Activated CD8-positive, alpha-beta T cell treated with anti-CD3 and anti-CD28 coated beads, Interleukin-2, amount 10 ng/mL, durations not matched to agents 7 days and 5 days (primary cell): ENCODE measurements at regions of chr4 and their contacts with region 1.

Region 1: DNA sequence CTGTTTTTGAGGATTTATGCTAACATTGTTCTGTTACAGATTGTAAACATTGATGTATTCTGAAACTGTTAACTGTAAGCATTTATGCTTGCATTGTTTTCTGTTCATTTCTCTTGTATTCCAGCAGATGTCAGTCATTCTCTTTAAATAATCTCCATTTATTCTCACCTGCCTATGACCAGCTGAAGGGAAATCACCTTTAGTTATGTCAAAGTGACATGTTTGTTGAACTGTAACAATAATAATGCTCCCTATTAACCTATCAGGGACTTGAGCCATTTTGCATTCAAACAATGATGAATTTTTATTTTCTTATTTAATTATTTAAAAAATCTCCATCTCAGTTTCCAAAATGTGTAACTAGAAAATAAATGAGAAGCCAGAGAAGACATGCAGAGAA is 58.0 kb downstream of the SPCS3 start:
- DNase-seq: no peak
- ATAC-seq: no peak
- H3K4me3 Mint-ChIP-seq: no peak overlapping the region
- H3K27ac Mint-ChIP-seq: no peak overlapping the region
- H3K4me1 Mint-ChIP-seq: no peaks in the 10 kb centered on the region
- H3K27me3 Mint-ChIP-seq: no peaks in the 10 kb centered on the region

Region 2: DNA sequence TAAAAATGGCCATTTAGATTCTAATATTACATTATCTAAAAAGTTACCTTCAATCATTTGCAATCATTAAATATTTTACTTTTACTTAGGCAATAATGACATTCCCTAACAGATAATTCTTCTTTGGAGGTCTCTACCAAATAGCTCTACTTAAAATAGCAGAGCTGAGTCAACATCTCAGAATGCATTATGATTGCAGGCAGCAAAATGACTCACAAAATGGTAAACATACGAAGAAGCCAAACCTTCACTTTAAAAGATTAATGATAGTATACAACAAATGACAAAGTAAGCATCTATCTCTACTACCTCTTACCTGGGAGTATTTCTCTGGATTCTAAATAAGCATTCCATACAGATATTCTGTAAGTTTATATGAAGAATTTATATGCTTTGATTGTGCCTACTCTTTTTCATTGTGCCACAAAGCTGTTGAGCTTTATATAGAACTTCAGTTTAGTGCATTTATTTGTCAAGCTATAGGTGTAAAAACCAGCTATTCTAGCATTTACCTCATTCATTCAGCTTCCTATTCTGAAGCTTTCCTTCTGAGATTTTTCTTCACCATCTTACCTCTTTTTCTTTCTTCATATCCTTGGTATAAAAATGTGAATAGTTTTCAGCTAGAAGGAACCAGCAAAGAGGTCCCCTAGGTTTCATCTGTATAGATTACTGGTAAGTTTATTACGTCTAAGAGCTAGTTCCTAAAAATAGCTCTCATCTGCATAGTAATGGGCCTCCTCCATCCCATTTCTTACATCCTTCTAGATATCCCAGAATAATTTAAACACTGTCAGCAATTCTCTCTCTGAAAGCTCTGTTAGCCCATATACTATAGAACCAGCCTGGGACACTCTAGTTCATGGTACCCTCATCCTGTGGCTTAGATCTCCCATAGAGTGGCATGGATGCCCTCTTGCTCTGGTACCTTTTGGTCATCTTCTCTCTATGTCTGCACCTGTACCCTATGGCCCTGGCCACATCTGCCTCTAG is 75.2 kb before region 1 on chr4:
- CTCF ChIA-PET with region 1: no interaction called
- POLR2A ChIA-PET with region 1: no interaction called
- DNase-seq: no peak
- ATAC-seq: no peak
- H3K4me3 Mint-ChIP-seq: no peak overlapping the region
- H3K27ac Mint-ChIP-seq: no peak overlapping the region
- H3K4me1 Mint-ChIP-seq: no peaks in the 10 kb centered on the region
- H3K27me3 Mint-ChIP-seq: peaks cover 8% of the 10 kb centered on the region

Region 3: DNA sequence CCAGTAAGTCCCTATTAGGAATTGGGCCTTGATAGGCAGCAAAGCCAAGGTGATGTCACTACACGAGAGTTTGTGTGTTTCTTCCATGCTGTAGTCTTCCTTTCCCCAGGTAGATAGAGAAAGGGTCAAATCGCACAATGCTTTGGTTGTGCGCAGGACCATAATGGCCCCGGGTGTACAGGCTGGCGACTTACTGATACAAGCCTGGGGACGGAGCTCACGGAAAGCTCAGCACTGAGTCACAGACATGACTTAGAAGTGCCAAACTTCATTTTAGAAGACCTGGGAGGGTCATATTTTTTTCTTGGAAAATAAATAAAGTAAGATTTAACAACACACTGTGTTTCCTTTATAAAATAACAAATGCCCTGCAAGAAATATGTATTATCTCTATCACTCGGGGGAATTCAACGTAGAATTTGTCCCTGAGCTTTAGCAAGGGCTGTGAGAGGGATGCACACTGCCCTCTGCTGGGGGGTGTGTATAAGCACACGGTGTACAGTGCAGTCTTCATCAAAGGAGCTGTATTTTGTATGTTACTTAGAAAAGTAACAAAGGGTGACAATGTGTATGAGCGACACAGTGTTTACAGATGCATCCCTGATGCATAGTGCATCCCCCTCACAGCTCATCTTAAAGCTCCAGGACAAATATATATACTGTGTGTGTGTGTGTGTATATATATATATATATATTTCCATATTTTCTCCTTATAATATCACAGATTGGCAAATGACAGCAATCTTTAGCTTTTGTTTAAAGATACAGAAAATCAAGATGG is 669.5 kb after region 1 on chr4:
- CTCF ChIA-PET with region 1: interaction called, 18 read pairs
- POLR2A ChIA-PET with region 1: no interaction called
- DNase-seq: peak; percentile 73
- ATAC-seq: peak; percentile 90
- H3K4me3 Mint-ChIP-seq: no peak overlapping the region
- H3K27ac Mint-ChIP-seq: no peak overlapping the region
- H3K4me1 Mint-ChIP-seq: no peaks in the 10 kb centered on the region
- H3K27me3 Mint-ChIP-seq: peaks cover 2% of the 10 kb centered on the region